Sigmoid colon (tissue), 7 donors: ENCODE measurements at regions of chr20 and their contacts with region 1.

Region 1: GRCh38 chr20:47379433-47380150 is 23.1 kb upstream of the ZMYND8 start:
- DNase-seq: no peak
- H3K4me3 ChIP-seq: no peak overlapping the region
- H3K27ac ChIP-seq: peak overlapping the region in 2 of 4 donors; percentile 20 to 67
- H3K4me1 ChIP-seq: peaks cover 0 to 27% (median 22%) of the 10 kb centered on the region in 4 donors
- H3K27me3 ChIP-seq: no peaks in the 10 kb centered on the region
- CTCF ChIP-seq: no peak
- EP300 ChIP-seq: peak in 2 of 4 donors; percentile 55 to 60
- POLR2A ChIP-seq: no peak

Region 2: DNA sequence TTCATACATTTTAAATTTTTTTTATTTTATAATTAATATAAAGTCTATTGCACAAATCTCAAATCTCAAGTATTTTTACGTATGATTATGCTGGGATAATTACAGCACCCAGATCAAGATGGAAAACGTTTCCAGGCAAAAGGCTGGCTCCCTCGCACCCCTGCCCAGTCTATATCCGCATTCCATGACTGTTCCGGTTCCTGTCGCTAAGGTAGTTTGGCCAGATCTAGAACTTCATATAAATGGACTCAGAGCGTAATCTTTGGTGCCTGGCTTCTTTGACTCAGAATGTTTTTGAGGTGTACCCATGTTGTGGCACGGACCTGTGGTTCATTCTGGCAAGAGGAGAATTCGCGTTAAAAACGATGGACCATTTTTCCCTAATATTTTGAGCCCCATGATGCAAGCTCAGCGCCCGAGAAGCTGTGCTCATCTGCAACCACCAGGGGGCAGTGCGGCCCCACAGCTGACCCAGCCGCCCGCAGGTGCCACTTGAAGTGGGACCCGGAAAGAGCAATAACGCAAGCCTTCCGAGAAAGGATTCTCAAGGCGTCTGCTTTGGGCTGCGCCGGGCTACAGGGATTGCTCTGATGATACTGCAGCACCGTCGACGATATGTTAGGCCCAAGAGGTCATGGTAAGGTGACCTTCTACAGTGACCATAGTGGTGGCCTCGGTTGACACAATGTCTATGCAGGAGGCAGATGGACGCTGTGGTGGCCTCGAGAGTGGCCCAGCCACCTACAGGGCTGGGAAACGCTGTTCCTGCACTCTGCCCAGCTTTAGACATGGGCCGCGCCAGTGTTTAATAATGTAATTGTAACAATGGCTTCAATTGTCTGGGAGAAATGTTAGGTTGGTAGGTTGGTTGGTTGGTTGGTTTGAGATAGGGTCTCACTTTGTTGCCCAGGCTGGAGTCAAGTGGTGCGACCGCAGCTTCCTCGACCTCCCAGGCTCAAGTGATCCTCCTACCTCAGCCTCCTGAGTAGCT is 183.2 kb before region 1 on chr20:
- intact Hi-C with region 1: loop called (anchors 1 kb)
- DNase-seq: peak; percentile 78
- H3K4me3 ChIP-seq: no peak overlapping the region
- H3K27ac ChIP-seq: no peak overlapping the region
- H3K4me1 ChIP-seq: peaks cover 0 to 6% (median 2%) of the 10 kb centered on the region in 4 donors
- H3K27me3 ChIP-seq: no peaks in the 10 kb centered on the region
- CTCF ChIP-seq: peak; percentile 72 to 96 (median 88)
- EP300 ChIP-seq: no peak
- POLR2A ChIP-seq: no peak

Region 3: DNA sequence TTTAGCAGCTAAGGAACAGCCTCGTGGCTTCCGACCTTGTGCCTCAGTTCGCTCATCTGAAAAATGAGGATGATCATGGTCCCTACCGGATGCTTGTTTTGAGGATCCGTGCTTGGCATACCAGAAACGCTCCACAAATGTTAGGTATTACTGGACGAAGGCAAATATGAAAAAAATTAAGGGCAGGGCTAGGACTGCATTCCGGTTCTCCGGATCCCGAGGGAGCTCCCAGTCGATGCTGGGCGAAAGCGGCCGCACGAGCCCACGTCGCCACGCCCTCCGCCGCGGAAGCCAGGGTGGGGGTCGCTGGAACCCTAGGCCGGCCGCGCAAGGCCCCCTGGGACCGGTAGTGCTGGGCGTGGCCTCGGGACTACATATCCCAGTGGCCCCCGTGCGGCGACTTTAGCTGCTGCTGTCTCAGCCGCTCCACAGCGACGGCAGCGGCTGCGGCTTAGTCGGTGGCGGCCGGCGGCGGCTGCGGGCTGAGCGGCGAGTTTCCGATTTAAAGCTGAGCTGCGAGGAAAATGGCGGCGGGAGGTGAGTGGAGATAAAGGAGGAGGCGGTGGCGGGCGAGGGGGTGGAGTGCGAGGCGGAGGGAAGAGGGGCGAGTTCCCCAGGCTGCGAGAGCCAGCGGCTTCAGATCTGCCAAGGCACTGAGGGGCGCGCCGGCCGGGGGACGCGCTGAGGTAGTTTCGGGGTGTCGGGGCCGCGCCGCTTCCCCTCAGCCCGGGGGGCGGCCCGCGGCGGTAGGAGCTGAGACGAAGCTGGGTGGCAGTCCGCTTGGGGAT is 122.1 kb after region 1 on chr20 and contains the start of gene NCOA3:
- intact Hi-C with region 1: loop called (anchors 5 kb)
- DNase-seq: peak; percentile 95
- H3K4me3 ChIP-seq: peak within 1 kb of the TSS; percentile 69 to 94 (median 91)
- H3K27ac ChIP-seq: peak within 1 kb of the TSS; percentile 91 to 96 (median 94)
- H3K4me1 ChIP-seq: peaks cover 0 to 24% (median 17%) of the 10 kb centered on the region in 4 donors
- H3K27me3 ChIP-seq: no peaks in the 10 kb centered on the region
- CTCF ChIP-seq: peak; percentile 42 to 81 (median 70)
- EP300 ChIP-seq: no peak
- POLR2A ChIP-seq: peak; percentile 93 to 96
- total RNA-seq, gene NCOA3: 22.8 to 51.0 (median 26.4) TPM